Activated naive CD8-positive, alpha-beta T cell treated with anti-CD3 and anti-CD28 coated beads, Interleukin-2, amount 10 ng/mL, durations not matched to agents 7 days and 5 days (primary cell): ENCODE measurements at regions of chr16 and their contacts with region 1.

Region 1: GRCh38 chr16:48365581-48366164 is 19.5 kb downstream of the SIAH1 start:
- DNase-seq: peak; percentile 88
- ATAC-seq: peak; percentile 97
- H3K4me3 Mint-ChIP-seq: peak overlapping the region; percentile 91
- H3K27ac Mint-ChIP-seq: peak overlapping the region; percentile 99
- H3K4me1 Mint-ChIP-seq: peaks cover 43% of the 10 kb centered on the region
- H3K27me3 Mint-ChIP-seq: no peaks in the 10 kb centered on the region

Region 2: DNA sequence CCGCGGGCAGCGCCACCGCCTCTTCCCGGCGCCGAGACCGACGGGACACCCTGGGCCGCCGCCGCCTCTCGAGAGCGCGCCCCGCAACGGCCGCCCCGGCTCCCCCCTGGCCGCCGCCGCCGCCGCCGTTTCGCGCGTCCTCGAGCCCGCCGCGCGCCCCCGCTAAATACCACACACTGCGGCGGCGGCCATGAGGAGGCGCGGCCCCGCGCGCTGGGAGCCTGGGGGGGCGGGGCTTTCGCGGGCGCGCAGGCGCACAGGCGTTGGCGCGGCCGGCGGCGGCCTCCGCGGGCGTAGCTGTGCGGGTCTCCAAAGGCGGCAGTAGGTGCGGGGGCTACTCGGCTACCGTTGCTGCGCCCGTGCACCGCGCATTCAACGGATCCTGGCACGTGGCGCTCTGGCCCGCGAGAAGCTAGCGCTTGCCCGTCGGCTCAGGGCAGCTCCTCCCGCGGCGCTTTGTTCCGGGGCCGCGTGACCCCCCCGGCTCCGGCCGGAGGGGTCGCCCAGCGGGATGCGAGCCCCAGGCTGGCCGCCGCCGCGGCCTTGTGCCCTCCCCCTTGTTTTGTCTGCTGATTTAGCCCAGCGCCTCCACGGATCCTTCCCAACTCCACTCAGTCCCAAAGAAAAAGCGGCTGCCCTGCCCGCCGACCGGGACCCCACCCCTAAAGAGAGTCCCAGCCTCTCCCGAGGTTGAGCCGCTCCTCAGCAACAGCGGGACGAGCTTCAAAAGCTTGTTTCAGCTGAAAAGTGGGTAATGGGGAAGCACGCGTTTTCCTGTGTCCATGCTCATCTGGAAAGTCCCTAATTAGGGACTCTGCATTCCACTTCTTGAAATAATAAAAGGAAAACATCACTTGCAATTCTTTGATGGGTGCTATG is 19.8 kb after region 1 on chr16 and contains the start of gene SIAH1:
- POLR2A ChIA-PET with region 1: interaction called, 27 read pairs
- DNase-seq: peak; percentile 97
- ATAC-seq: peak; percentile 79
- H3K4me3 Mint-ChIP-seq: peak within 1 kb of the TSS; percentile 95
- H3K27ac Mint-ChIP-seq: peak within 1 kb of the TSS; percentile 90
- H3K4me1 Mint-ChIP-seq: peaks cover 17% of the 10 kb centered on the region
- H3K27me3 Mint-ChIP-seq: no peaks in the 10 kb centered on the region
- total RNA-seq, gene SIAH1: 15.9 to 16.5 TPM

Region 3: DNA sequence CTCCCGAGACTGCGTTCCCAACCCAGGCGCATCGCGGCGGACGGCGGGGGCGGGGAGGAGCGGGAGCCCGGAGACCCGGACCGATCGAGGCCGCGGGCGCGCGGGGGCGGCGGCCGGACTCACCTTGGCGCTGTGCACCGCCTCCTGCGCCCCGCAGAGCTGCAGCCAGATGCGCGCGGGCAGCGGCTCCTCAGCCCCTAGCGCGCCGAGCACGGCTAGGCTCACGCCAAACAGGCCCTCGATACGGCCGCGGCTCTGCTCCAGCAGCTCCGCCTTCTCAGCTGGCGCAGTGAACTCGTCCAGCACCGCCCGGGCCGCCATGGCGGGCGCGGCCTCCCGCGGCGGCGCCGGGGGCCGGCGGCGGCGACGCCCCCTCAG is 244.0 kb after region 1 on chr16:
- POLR2A ChIA-PET with region 1: interaction called, 22 read pairs
- DNase-seq: no peak
- ATAC-seq: peak; percentile 39
- H3K4me3 Mint-ChIP-seq: no peak overlapping the region
- H3K27ac Mint-ChIP-seq: peak overlapping the region; percentile 59
- H3K4me1 Mint-ChIP-seq: peaks cover 38% of the 10 kb centered on the region
- H3K27me3 Mint-ChIP-seq: no peaks in the 10 kb centered on the region